CD8-positive, alpha-beta T cell (primary cell): ENCODE measurements at regions of chr12 and their contacts with region 1.

Region 1: DNA sequence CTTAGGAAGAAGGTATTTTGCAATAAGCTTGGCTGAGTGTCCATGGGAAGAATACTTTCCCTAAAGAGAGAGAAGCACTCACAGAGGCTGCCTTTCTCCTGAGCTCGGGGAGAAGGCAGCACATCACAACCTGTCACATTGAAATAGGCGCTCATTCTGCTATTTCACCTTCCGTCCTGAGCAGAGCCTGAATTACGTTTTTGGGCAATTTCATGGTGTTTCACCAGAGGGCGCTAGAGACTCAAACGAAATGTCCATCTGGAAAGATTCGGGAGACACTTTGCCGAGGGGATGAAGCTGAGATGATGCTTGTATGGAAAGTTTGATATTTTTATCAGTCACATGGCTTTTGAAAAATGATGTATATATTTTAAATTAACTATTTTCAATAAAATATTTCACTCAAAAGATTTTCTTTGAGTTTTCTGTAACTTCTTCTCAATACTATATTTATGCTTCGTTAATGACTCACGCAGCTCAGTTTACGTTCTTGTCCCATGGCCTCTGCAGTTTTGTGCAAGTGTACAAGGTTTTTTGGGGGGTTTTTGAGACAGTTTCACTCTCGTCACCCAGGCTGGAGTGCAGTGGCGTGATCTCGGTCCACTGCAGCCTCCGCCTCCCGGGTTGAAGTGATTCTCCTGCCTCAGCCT is 17.4 kb upstream of the B4GALNT3 start:
- DNase-seq: peak in 6 of 9 experiments; percentile 29 to 64 (median 58)
- ATAC-seq: no peak
- H3K4me3 ChIP-seq: no peak overlapping the region
- H3K4me3 Mint-ChIP-seq: no peak overlapping the region
- H3K27ac ChIP-seq: no peak overlapping the region
- H3K27ac Mint-ChIP-seq: no peak overlapping the region
- H3K4me1 ChIP-seq: no peaks in the 10 kb centered on the region
- H3K4me1 Mint-ChIP-seq: no peaks in the 10 kb centered on the region
- H3K27me3 ChIP-seq: no peaks in the 10 kb centered on the region
- H3K27me3 Mint-ChIP-seq: peaks cover 2% of the 10 kb centered on the region
- CTCF ChIP-seq: peak; percentile 74

Region 2: GRCh38 chr12:278046-278445 is 164.3 kb before region 1 on chr12:
- CTCF ChIA-PET with region 1: no interaction called
- POLR2A ChIA-PET with region 1: no interaction called
- intact Hi-C with region 1: no loop called
- DNase-seq: no peak
- ATAC-seq: no peak
- H3K4me3 ChIP-seq: no peak overlapping the region
- H3K4me3 Mint-ChIP-seq: no peak overlapping the region
- H3K27ac ChIP-seq: no peak overlapping the region
- H3K27ac Mint-ChIP-seq: no peak overlapping the region
- H3K4me1 ChIP-seq: no peaks in the 10 kb centered on the region
- H3K4me1 Mint-ChIP-seq: no peaks in the 10 kb centered on the region
- H3K27me3 ChIP-seq: no peaks in the 10 kb centered on the region
- H3K27me3 Mint-ChIP-seq: no peaks in the 10 kb centered on the region
- CTCF ChIP-seq: no peak

Region 3: GRCh38 chr12:332581-333205 is 109.7 kb before region 1 on chr12:
- CTCF ChIA-PET with region 1: no interaction called
- POLR2A ChIA-PET with region 1: no interaction called
- intact Hi-C with region 1: no loop called
- DNase-seq: no peak
- ATAC-seq: no peak
- H3K4me3 ChIP-seq: no peak overlapping the region
- H3K4me3 Mint-ChIP-seq: no peak overlapping the region
- H3K27ac ChIP-seq: no peak overlapping the region
- H3K27ac Mint-ChIP-seq: no peak overlapping the region
- H3K4me1 ChIP-seq: no peaks in the 10 kb centered on the region
- H3K4me1 Mint-ChIP-seq: peaks cover 17% of the 10 kb centered on the region
- H3K27me3 ChIP-seq: no peaks in the 10 kb centered on the region
- H3K27me3 Mint-ChIP-seq: no peaks in the 10 kb centered on the region
- CTCF ChIP-seq: no peak

Region 4: GRCh38 chr12:422526-422925 is 19.8 kb before region 1 on chr12:
- CTCF ChIA-PET with region 1: interaction called, 10 read pairs
- POLR2A ChIA-PET with region 1: no interaction called
- intact Hi-C with region 1: no loop called
- DNase-seq: no peak
- ATAC-seq: no peak
- H3K4me3 ChIP-seq: no peak overlapping the region
- H3K4me3 Mint-ChIP-seq: no peak overlapping the region
- H3K27ac ChIP-seq: no peak overlapping the region
- H3K27ac Mint-ChIP-seq: no peak overlapping the region
- H3K4me1 ChIP-seq: no peaks in the 10 kb centered on the region
- H3K4me1 Mint-ChIP-seq: no peaks in the 10 kb centered on the region
- H3K27me3 ChIP-seq: no peaks in the 10 kb centered on the region
- H3K27me3 Mint-ChIP-seq: no peaks in the 10 kb centered on the region
- CTCF ChIP-seq: no peak

Region 5: DNA sequence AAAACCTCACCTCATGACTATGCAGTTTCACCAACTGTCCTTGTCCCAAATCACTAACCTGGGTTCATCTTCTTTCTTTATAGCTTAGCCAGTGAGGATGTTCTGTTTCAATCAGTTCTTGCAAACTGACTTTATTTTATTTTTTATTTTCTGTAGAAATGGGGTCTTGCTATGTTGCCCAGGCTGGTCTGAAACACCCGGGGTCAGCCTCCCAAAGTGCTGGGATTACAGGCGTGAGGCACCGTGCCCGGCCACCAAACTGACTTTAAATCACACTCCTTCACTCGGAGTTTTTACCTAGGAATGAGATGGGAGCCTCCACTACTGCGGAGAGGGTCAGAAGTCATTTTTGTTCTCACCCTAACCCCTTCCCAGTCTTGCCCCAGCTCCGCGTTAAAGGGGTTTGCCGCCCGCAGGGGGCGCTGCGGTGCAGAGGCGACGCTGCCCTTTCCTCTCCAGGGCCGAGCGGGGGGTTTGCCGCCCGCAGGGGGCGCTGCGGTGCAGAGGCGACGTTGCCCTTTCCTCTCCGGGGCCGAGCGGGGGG is 10.4 kb after region 1 on chr12:
- CTCF ChIA-PET with region 1: interaction called, 10 read pairs
- POLR2A ChIA-PET with region 1: interaction called, 3 read pairs
- intact Hi-C with region 1: no loop called
- DNase-seq: peak in 7 of 9 experiments; percentile 17 to 72 (median 59)
- ATAC-seq: no peak
- H3K4me3 ChIP-seq: no peak overlapping the region
- H3K4me3 Mint-ChIP-seq: no peak overlapping the region
- H3K27ac ChIP-seq: no peak overlapping the region
- H3K27ac Mint-ChIP-seq: no peak overlapping the region
- H3K4me1 ChIP-seq: no peaks in the 10 kb centered on the region
- H3K4me1 Mint-ChIP-seq: peaks cover 2% of the 10 kb centered on the region
- H3K27me3 ChIP-seq: no peaks in the 10 kb centered on the region
- H3K27me3 Mint-ChIP-seq: peaks cover 15% of the 10 kb centered on the region
- CTCF ChIP-seq: no peak

Region 6: DNA sequence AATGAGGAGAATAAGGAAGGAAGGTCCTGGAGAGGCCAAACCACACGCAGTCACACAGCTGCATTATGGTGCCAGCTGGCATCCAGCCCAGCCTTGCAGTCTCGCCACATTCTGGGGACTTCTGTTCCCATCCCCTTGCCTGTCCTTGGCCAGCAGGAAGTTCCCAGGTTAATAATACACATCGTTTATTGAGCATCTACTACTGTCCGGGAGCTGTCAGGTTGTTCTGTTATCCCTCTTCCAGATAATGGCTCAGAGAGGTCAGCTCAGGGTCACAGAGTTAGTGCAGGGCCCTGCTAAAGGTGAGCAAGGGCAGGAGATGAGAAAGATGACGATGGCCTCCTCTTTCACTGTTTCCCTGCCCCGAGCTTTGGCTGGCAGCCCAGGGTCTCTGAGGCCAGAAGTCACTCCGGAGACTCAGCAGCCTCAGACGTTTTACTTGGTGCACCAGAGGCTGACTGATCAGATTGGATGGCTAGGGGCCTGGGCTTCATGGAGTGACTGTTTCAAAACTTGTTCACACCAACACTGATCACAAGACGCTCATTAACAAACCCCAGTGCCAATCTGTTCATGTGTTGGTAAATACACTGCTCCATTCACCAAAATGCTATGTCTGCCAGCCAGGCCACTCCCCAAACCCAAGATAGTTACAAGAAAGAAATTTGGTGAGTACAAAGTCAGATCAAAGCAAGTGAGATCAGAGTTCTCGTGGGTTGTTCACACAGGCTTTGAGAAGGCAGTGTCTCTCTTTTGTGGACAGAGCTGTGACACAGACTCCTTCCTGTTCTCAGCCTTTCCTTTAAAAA is 96.6 kb after region 1 on chr12:
- CTCF ChIA-PET with region 1: interaction called, 23 read pairs
- POLR2A ChIA-PET with region 1: no interaction called
- intact Hi-C with region 1: no loop called
- DNase-seq: peak in 7 of 9 experiments; percentile 29 to 92 (median 56)
- ATAC-seq: peak; percentile 96
- H3K4me3 ChIP-seq: peak overlapping the region in 1 of 2 experiments; percentile 15
- H3K4me3 Mint-ChIP-seq: peak overlapping the region; percentile 42
- H3K27ac ChIP-seq: peak overlapping the region in 1 of 2 experiments; percentile 75
- H3K27ac Mint-ChIP-seq: peak overlapping the region; percentile 33
- H3K4me1 ChIP-seq: peaks cover 33% of the 10 kb centered on the region
- H3K4me1 Mint-ChIP-seq: peaks cover 23% of the 10 kb centered on the region
- H3K27me3 ChIP-seq: no peaks in the 10 kb centered on the region
- H3K27me3 Mint-ChIP-seq: peaks cover 6% of the 10 kb centered on the region
- CTCF ChIP-seq: no peak

Region 7: DNA sequence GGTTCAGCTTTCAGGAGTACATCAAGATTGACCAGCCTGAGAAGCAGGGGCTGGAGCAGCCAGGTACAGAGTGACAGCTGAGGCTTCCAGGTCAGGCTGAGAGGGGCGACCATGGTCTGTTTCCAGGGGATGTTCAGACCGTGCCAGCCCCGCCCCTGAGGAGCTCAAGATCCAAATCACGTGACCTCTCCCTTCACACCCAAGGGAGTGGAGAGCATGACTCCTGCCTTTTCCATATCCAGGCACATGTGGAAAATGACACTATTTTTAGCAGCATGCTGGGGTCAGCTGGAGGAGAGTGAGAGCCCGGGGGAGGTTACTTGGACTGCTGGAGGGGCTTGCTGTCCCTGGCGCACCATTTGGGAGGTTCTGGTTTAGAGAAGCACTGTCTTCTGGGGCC is 110.1 kb after region 1 on chr12:
- CTCF ChIA-PET with region 1: interaction called, 86 read pairs
- POLR2A ChIA-PET with region 1: no interaction called
- intact Hi-C with region 1: loop called (anchors 1 kb)
- DNase-seq: no peak
- ATAC-seq: no peak
- H3K4me3 ChIP-seq: no peak overlapping the region
- H3K4me3 Mint-ChIP-seq: peak overlapping the region; percentile 77
- H3K27ac ChIP-seq: no peak overlapping the region
- H3K27ac Mint-ChIP-seq: peak overlapping the region; percentile 49
- H3K4me1 ChIP-seq: peaks cover 31% of the 10 kb centered on the region
- H3K4me1 Mint-ChIP-seq: peaks cover 52% of the 10 kb centered on the region
- H3K27me3 ChIP-seq: no peaks in the 10 kb centered on the region
- H3K27me3 Mint-ChIP-seq: no peaks in the 10 kb centered on the region
- CTCF ChIP-seq: no peak

Region 8: DNA sequence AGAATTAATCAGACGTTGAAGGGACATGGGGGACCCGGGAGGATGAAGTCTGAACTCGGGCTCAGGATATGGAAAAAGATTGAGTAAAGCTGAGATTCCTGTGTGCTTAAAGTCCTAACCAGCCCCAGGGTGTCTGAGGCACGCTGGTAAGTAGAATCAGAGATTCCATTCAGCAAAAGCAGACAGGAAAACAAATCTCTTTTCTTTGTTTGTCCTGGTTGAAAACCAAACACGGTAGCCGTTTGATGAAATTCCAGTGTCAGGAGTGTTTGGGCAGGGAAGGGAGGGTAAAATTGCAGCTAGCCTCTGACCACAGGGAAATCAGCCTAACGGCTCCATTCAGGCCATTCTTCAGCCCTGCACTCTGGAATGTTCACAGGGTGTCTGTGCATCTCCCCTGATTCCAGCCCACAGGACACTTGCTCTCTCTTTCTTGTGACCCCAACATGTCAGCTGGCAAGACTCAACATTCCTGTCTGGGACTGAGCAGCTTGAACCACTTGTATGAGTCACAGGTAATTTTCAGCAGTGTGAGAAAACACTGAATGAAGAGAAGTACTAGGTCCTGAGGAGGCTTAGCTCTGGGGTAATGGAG is 189.8 kb after region 1 on chr12:
- CTCF ChIA-PET with region 1: no interaction called
- POLR2A ChIA-PET with region 1: no interaction called
- intact Hi-C with region 1: no loop called
- DNase-seq: no peak
- ATAC-seq: no peak
- H3K4me3 ChIP-seq: no peak overlapping the region
- H3K4me3 Mint-ChIP-seq: no peak overlapping the region
- H3K27ac ChIP-seq: no peak overlapping the region
- H3K27ac Mint-ChIP-seq: peak overlapping the region; percentile 60
- H3K4me1 ChIP-seq: no peaks in the 10 kb centered on the region
- H3K4me1 Mint-ChIP-seq: peaks cover 14% of the 10 kb centered on the region
- H3K27me3 ChIP-seq: no peaks in the 10 kb centered on the region
- H3K27me3 Mint-ChIP-seq: no peaks in the 10 kb centered on the region
- CTCF ChIP-seq: no peak